Thyroid gland (tissue), 4 donors: ENCODE measurements at regions of chr15 and their contacts with region 1.

Region 1: DNA sequence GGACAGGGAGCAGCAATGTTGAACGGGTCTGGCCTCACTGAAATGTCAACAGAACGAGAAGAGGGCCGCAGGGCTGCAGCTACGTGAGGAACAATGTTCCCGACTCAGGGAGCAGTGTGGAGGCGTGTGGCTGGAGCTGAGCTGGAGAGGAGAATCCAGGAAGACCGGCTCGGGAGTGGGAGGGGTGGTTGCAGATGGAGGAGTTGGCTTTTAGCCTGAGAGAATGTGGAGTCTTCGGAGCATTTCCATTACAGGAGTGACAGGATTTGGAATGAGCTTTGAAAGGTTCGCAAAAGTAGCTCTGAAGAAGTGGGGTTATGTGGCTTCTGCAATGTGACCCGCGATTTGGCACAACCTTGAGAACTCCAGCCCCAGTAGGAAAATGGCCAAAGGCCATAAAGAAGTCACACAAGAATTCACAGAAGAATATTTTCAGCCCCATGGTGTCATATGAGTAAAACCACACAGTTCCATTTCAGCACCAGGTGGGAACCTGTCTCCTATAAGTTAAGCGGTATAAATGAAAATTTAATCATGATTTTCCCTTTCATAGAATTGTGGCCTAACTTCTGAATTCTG is 78.8 kb upstream of the NSMCE3 start:
- DNase-seq: peak; percentile 89
- H3K4me3 ChIP-seq: no peak overlapping the region
- H3K27ac ChIP-seq: peak overlapping the region; percentile 20 to 71 (median 55)
- H3K4me1 ChIP-seq: peaks cover 20 to 42% of the 10 kb centered on the region in 2 donors
- H3K27me3 ChIP-seq: no peaks in the 10 kb centered on the region
- CTCF ChIP-seq: no peak
- POLR2A ChIP-seq: peak in 1 of 2 donors; percentile 46

Region 2: DNA sequence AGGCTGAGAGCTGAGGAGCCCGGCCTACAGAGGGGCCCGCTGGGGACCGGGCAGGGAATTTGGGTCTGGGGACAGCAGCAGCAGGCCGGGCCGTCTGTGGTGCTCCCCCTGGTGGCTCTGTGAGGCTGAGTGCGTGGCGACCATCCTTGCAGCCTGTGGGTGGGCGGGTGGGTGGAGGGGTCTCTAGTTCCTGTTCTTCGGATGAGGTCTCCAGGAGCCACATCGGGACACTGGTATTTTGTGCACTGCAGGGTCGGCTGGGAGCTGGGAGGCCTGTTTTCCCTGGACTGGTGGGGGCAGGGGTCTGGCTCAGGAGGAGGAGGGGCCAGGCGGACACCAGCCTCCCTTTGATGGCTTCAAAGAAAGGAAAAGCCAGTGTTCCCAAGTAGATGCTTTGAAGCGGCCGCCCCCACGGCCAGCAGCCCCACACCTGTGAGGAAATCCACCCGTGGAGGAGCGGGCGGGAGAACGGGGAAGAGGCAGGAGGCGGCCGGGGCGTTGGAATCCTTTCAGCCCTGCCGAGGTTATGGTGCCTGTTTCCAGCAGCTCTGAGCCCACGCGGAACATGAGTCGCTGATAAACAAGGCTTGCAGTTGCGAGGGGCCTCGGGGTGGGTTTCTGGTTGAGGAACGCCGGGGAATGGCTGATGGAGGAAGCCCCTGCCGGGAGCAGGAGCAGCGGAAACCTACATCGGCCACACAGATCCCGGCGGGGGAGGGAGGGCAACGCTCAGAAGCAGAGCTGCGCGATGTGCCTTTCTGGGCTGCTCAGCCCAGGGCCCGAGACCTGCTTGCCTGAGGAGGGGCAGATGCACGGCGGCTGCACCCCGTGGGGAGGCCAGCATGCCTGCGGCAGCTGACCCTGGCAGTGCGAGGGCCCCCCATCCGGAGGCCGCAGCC is 233.1 kb before region 1 on chr15:
- intact Hi-C with region 1: no loop called
- DNase-seq: peak; percentile 19 to 25
- H3K4me3 ChIP-seq: peak overlapping the region in 1 of 3 donors; percentile 26
- H3K27ac ChIP-seq: no peak overlapping the region
- H3K4me1 ChIP-seq: peaks cover 10% of the 10 kb centered on the region in 2 donors
- H3K27me3 ChIP-seq: no peaks in the 10 kb centered on the region
- CTCF ChIP-seq: peak in 2 of 6 experiments; percentile 42 to 56
- POLR2A ChIP-seq: no peak

Region 3: GRCh38 chr15:29289173-29289572 is 59.3 kb before region 1 on chr15:
- intact Hi-C with region 1: loop called (anchors 10 kb)
- DNase-seq: no peak
- H3K4me3 ChIP-seq: no peak overlapping the region
- H3K27ac ChIP-seq: no peak overlapping the region
- H3K4me1 ChIP-seq: no peaks in the 10 kb centered on the region
- H3K27me3 ChIP-seq: no peaks in the 10 kb centered on the region
- CTCF ChIP-seq: no peak
- POLR2A ChIP-seq: no peak

Region 4: GRCh38 chr15:29438656-29439055 is 90.2 kb after region 1 on chr15:
- intact Hi-C with region 1: no loop called
- DNase-seq: no peak
- H3K4me3 ChIP-seq: no peak overlapping the region
- H3K27ac ChIP-seq: no peak overlapping the region
- H3K4me1 ChIP-seq: peaks cover 0 to 3% of the 10 kb centered on the region in 2 donors
- H3K27me3 ChIP-seq: no peaks in the 10 kb centered on the region
- CTCF ChIP-seq: no peak
- POLR2A ChIP-seq: no peak

Region 5: DNA sequence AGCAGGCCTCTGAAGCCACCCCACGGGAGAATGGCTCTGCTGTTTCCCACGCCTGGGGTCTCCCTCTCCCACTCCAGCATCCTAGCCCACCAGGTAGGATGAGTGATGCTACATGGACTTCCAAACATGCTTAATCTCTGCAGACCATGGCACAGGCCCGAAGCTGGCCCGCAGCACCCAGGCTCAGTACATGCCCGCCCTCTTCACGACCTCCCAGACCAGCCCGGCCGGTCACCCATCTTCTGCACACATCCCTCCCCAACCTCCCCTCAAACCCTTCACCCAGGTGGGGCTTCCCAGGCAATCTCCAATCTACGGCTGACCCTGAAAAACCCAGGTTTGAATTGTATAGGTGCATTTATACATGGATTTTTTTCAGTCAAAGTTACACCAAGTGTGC is 209.8 kb after region 1 on chr15:
- intact Hi-C with region 1: no loop called
- DNase-seq: no peak
- H3K4me3 ChIP-seq: no peak overlapping the region
- H3K27ac ChIP-seq: no peak overlapping the region
- H3K4me1 ChIP-seq: no peaks in the 10 kb centered on the region
- H3K27me3 ChIP-seq: no peaks in the 10 kb centered on the region
- CTCF ChIP-seq: no peak
- POLR2A ChIP-seq: no peak

Region 6: GRCh38 chr15:29724026-29724425 is 375.6 kb after region 1 on chr15:
- intact Hi-C with region 1: no loop called
- DNase-seq: no peak
- H3K4me3 ChIP-seq: no peak overlapping the region
- H3K27ac ChIP-seq: no peak overlapping the region
- H3K4me1 ChIP-seq: no peaks in the 10 kb centered on the region
- H3K27me3 ChIP-seq: no peaks in the 10 kb centered on the region
- CTCF ChIP-seq: no peak
- POLR2A ChIP-seq: no peak